Posterior vena cava (tissue), 2 donors: ENCODE measurements at regions of chr10 and their contacts with region 1.

Region 1: GRCh38 chr10:132987671-132988571 is 45.6 kb upstream of the CFAP46 start:
- DNase-seq: peak; percentile 90

Region 2: GRCh38 chr10:131928248-131929095 is 1059.4 kb before region 1 on chr10:
- intact Hi-C with region 1: loop called in 1 of 2 experiments (anchors 10 kb)
- DNase-seq: no peak